ENCODE measurements at regions of chr10 and their contacts with region 1.

Region 1: GRCh38 chr10:77846718-77847630 is 79.6 kb downstream of the DLG5 start:
- DNase-seq: peak; percentile 46
- H3K4me3 ChIP-seq: no peak overlapping the region
- H3K27ac ChIP-seq: peak overlapping the region; percentile 23
- H3K4me1 ChIP-seq: peaks cover 28% of the 10 kb centered on the region
- H3K27me3 ChIP-seq: no peaks in the 10 kb centered on the region
- CTCF ChIP-seq: peak; percentile 94 to 98

Region 2: GRCh38 chr10:77873536-77874380 is 26.8 kb after region 1 on chr10:
- CTCF ChIA-PET with region 1: no interaction called
- dilution Hi-C with region 1: no loop called
- in situ Hi-C with region 1: no loop called
- intact Hi-C with region 1: loop called (anchors 2 kb)
- DNase-seq: peak; percentile 91
- H3K4me3 ChIP-seq: peak overlapping the region in 1 of 3 experiments; percentile 8
- H3K27ac ChIP-seq: peak overlapping the region; percentile 78
- H3K4me1 ChIP-seq: peaks cover 74% of the 10 kb centered on the region
- H3K27me3 ChIP-seq: no peaks in the 10 kb centered on the region
- CTCF ChIP-seq: no peak

Region 3: DNA sequence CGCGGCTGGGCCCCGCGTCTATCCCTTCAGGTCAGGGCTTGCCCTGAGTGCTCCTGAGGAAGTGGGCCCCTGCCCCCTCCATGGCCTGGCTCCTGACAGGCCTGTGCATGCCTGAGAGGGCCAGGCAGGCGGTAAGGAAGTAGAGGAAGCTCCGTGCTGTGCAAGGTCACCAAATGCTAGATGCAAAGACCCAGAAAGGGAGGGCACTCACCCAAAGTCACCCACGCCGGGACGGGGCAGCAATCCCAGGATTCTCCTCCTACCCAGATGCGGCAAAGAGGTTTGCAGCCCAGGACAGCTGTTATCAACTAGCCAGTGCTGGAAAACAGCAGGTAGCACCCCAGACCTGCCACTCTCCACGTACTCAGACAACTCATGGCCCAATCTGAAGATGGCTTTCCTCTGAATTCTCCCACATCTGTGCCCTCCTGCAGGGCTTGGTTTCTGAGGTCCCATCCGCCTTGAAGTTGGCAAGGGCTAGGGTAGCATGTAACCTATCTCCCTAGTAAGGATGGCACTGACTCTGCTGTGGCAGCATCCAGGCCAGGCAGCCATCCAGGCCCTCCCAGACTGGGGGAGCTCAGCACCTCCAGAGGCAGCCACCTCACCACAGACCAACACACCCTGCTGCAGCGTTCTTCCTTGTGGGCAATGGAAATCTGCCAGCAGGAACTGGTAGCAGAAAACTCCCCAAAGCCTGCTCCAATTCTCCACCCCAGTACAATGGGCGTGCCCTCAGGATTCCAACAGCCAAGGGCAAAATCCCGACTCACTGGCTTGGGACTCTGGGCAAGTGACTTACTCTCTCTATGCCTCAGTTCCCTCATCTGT is 51.9 kb after region 1 on chr10:
- CTCF ChIA-PET with region 1: interaction called, 3 read pairs
- dilution Hi-C with region 1: no loop called
- in situ Hi-C with region 1: no loop called
- intact Hi-C with region 1: loop called (anchors 2 kb)
- DNase-seq: peak; percentile 98
- H3K4me3 ChIP-seq: peak overlapping the region in 2 of 3 experiments; percentile 12 to 18
- H3K27ac ChIP-seq: peak overlapping the region; percentile 83
- H3K4me1 ChIP-seq: peaks cover 33% of the 10 kb centered on the region
- H3K27me3 ChIP-seq: no peaks in the 10 kb centered on the region
- CTCF ChIP-seq: no peak

Region 4: DNA sequence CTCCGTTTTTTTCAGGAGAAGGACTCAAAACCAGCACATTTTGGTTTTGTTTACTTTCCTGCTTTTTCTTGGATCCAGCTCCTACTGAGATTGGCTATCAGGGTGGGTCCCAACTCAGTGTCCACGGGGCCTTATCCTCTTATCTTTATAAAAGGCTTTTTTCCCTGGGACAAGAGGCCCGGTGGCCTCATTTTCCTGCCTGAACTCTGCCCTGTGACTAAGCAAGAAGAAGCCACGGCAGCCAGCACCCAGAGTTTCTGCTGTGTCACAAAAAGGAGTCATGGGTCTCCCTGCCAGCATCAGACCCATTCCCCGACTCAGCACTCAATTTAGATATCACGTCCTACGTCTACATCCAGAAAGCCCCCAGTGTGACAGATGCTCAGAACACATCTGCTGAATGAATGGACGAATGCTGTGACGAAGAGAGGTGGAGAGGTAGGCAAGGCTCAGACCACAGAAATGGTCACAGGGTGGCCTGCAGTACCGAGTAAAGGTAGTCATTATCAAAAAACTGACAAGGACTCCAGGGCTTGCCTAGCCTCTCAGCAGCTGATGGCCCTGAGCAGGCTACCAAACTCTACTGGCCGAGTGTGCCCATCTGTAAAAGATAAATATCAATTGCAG is 62.9 kb after region 1 on chr10:
- CTCF ChIA-PET with region 1: no interaction called
- dilution Hi-C with region 1: no loop called
- in situ Hi-C with region 1: no loop called
- intact Hi-C with region 1: no loop called
- DNase-seq: no peak
- H3K4me3 ChIP-seq: no peak overlapping the region
- H3K27ac ChIP-seq: no peak overlapping the region
- H3K4me1 ChIP-seq: peaks cover 12% of the 10 kb centered on the region
- H3K27me3 ChIP-seq: no peaks in the 10 kb centered on the region
- CTCF ChIP-seq: no peak

Region 5: GRCh38 chr10:77926566-77927401 is 79.8 kb after region 1 on chr10 and contains the start of gene DLG5:
- CTCF ChIA-PET with region 1: no interaction called
- dilution Hi-C with region 1: no loop called
- in situ Hi-C with region 1: no loop called
- intact Hi-C with region 1: loop called (anchors 1 kb)
- DNase-seq: peak; percentile 42
- H3K4me3 ChIP-seq: peak within 1 kb of the TSS; percentile 71 to 87 (median 76)
- H3K27ac ChIP-seq: peak within 1 kb of the TSS; percentile 40
- H3K4me1 ChIP-seq: peaks cover 34% of the 10 kb centered on the region
- H3K27me3 ChIP-seq: no peaks in the 10 kb centered on the region
- CTCF ChIP-seq: no peak
- total RNA-seq, gene DLG5: 40.8 to 76.5 TPM

Region 6: DNA sequence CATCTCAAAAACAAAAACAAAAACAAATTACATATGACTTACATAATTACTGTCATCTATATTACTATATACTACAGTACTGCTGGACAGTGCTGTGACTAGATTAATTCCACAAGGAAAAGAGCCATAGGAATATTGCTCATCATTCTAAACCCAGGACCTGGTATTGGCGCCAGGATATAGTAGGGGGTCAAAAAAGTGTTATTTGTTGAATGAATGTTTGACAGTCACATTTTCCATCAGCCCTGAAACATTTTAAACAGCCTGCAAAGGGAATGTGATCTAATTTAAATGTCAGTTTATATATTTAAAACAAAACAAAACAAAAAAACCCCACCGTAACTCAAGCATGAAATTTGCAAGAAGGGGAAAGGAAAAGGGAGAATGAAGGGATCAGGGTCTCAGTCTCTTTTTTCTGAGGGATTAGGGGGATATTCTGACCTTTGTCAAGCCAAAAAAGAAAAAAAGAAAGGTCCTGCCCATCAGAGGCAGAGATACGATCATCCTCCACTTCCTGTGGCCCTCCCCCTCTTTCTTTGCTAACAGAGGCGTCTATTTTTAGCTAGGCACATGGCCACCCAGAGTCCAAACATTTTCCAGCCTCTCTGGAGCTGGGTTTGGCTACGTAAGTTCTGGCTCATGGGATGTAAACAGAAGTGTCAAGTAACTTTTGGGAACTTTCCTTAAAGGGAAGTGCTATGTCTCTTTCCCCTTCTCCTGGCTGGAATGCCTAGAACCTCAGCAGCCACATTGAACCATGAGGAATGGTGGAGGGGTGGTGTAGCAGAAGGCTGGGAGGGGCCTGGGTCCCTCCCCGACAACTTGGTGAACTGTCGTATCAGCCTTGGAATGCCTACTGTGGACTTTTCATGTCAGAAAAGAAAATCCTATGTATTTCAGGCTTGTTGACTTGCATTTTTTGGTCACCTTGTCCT is 124.2 kb after region 1 on chr10:
- CTCF ChIA-PET with region 1: no interaction called
- dilution Hi-C with region 1: no loop called
- in situ Hi-C with region 1: loop called in 1 of 2 experiments (anchors 5 kb)
- intact Hi-C with region 1: loop called (anchors 1 kb)
- DNase-seq: no peak
- H3K4me3 ChIP-seq: no peak overlapping the region
- H3K27ac ChIP-seq: no peak overlapping the region
- H3K4me1 ChIP-seq: peaks cover 6% of the 10 kb centered on the region
- H3K27me3 ChIP-seq: no peaks in the 10 kb centered on the region
- CTCF ChIP-seq: no peak

Region 7: GRCh38 chr10:78004215-78005026 is 157.4 kb after region 1 on chr10:
- CTCF ChIA-PET with region 1: no interaction called
- dilution Hi-C with region 1: no loop called
- in situ Hi-C with region 1: loop called (anchors 10 to 25 kb)
- intact Hi-C with region 1: no loop called
- DNase-seq: no peak
- H3K4me3 ChIP-seq: no peak overlapping the region
- H3K27ac ChIP-seq: no peak overlapping the region
- H3K4me1 ChIP-seq: no peaks in the 10 kb centered on the region
- H3K27me3 ChIP-seq: no peaks in the 10 kb centered on the region
- CTCF ChIP-seq: no peak

Region 8: GRCh38 chr10:78029269-78030226 is 182.6 kb after region 1 on chr10 and contains the start of gene POLR3A:
- CTCF ChIA-PET with region 1: no interaction called
- dilution Hi-C with region 1: no loop called
- in situ Hi-C with region 1: loop called in 1 of 2 experiments (anchors 25 kb)
- intact Hi-C with region 1: loop called (anchors 1 kb)
- DNase-seq: peak; percentile 96
- H3K4me3 ChIP-seq: peak within 1 kb of the TSS; percentile 87 to 94 (median 87)
- H3K27ac ChIP-seq: peak within 1 kb of the TSS; percentile 74
- H3K4me1 ChIP-seq: peaks cover 38% of the 10 kb centered on the region
- H3K27me3 ChIP-seq: no peaks in the 10 kb centered on the region
- CTCF ChIP-seq: peak; percentile 53 to 72
- total RNA-seq, gene POLR3A: 20.8 to 21.2 TPM

Measured in mammary epithelial cell (primary cell).